Mammary epithelial cell (primary cell): ENCODE measurements at regions of chr19 and their contacts with region 1.

Region 1: DNA sequence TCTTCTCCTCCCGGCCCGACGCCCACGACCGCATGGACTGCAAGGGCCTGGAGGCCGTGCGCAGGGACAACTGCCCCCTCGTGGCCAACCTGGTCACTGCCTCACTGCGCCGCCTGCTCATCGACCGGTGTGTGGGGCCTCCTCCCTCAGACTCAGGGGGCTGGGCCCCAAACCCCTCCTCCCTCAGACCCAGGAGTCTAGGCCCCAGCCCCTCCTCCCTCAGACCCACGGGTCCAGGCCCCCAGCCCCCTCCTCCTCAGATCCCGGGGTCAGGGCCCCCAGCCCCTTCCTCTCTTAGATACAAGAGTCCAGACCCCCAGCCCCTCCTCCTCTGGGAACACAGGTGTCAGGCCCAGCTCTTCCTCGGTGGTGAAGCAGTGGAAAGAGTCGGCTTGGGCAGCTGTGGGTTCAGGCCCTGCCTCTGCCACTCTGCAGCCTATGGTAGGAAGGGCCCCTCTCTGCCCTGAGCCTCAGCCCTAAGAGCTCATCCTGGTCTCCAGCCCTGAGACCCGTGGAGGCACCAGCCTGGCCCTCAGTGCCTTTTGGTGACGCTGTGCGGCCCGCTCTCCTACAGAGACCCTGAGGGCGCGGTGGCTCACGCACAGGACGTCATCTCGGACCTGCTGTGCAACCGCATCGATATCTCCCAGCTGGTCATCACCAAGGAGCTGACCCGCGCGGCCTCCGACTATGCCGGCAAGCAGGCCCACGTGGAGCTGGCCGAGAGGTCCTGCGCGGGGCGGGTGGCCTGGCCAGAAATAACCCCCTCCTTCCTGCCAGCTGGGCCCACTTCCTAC is 3.7 kb upstream of the SPIB start:
- DNase-seq: peak; percentile 18
- H3K4me3 ChIP-seq: no peak overlapping the region
- H3K27ac ChIP-seq: no peak overlapping the region
- H3K4me1 ChIP-seq: no peaks in the 10 kb centered on the region
- H3K27me3 ChIP-seq: no peaks in the 10 kb centered on the region
- CTCF ChIP-seq: peak; percentile 57 to 69

Region 2: DNA sequence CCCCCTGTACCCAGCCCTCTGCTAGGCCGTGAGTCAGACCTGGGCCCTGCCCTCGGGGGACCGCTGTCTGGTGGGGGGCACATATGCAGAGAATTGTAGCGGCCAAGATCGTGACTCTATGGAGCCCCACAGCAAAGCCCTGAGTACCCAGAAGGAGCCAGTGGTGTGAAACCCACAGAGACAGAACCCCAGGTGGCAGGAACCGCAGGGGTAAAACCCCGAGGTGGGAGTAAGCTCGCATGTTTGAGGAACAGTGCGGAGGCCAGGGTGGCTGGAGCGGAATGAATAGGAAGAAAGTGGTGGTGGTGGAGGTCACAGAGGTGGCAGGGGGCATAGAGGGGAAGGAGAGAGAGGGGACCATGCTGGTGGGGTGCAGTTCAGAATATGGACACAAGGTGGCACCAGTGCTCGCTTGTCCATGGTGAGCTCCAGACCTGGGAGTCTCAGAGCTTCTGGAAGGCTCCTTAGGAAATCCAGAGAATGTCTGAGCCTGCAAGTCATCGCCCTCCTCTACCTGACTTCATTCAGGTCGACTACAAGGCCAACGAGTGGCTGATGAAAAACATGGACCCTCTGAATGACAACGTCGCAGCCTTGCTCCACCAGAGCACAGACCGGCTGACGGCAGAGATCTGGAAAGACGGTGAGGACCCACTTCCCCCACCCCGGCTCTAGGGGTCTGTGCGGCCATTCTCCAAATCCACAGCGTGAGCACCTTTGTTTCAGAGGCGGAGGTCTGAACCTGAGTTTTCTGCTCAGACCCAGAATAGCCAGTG is 162.8 kb before region 1 on chr19:
- CTCF ChIA-PET with region 1: interaction called, 26 read pairs
- dilution Hi-C with region 1: no loop called
- in situ Hi-C with region 1: no loop called
- intact Hi-C with region 1: no loop called
- DNase-seq: no peak
- H3K4me3 ChIP-seq: no peak overlapping the region
- H3K27ac ChIP-seq: no peak overlapping the region
- H3K4me1 ChIP-seq: no peaks in the 10 kb centered on the region
- H3K27me3 ChIP-seq: no peaks in the 10 kb centered on the region
- CTCF ChIP-seq: peak; percentile 29 to 41

Region 3: GRCh38 chr19:50357178-50358100 is 57.6 kb before region 1 on chr19:
- CTCF ChIA-PET with region 1: no interaction called
- dilution Hi-C with region 1: no loop called
- in situ Hi-C with region 1: no loop called
- intact Hi-C with region 1: loop called (anchors 1 kb)
- DNase-seq: peak; percentile 34
- H3K4me3 ChIP-seq: peak overlapping the region; percentile 16 to 53 (median 17)
- H3K27ac ChIP-seq: no peak overlapping the region
- H3K4me1 ChIP-seq: peaks cover 6% of the 10 kb centered on the region
- H3K27me3 ChIP-seq: no peaks in the 10 kb centered on the region
- CTCF ChIP-seq: peak; percentile 65 to 79

Region 4: DNA sequence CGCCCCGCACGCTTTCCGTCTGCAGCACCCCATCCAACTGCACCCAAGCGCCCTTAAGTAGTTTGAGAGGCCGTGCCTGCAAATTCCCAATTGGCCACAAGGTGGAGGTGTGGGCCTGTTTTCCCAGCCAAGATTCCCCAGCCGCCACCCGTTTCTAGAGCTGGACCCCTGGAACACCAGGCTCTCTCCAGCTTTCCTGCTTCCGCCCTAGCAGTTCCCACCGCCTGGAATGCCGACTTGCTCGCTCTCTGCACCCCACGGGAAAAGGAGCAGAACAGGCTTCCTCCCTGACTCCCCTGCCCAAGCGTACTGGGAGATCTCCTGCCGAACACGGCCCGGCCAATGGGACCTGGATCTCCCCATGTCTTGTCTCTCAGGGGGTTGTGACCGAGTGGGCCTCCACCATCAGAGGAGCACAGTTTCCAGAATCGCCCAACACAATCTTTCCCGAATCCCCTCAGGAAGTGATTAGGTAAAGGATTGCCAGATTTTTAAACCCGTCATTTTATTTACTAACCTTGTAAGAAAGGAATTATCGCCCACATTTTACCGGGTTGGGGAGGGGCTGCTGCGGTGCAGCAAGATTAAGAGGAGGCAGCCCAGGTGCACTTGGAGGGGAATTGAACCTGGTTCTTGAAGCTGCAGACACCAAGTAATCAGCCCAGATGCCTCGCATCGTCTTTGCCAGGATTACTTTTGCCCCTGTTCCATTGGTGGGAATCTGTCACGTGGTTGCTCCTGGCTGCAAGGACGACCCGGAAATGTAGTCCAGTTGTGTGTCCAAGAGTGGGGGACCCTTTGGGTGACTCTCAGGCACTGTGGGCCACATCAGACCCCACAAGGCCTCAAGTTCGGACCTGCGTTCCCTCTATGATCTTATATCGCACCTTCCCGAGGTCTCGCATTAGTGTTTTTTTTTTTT is 46.2 kb before region 1 on chr19:
- CTCF ChIA-PET with region 1: no interaction called
- dilution Hi-C with region 1: no loop called
- in situ Hi-C with region 1: no loop called
- intact Hi-C with region 1: loop called (anchors 1 kb)
- DNase-seq: peak; percentile 73
- H3K4me3 ChIP-seq: peak overlapping the region; percentile 72 to 75 (median 74)
- H3K27ac ChIP-seq: peak overlapping the region; percentile 36
- H3K4me1 ChIP-seq: peaks cover 5% of the 10 kb centered on the region
- H3K27me3 ChIP-seq: no peaks in the 10 kb centered on the region
- CTCF ChIP-seq: peak; percentile 68 to 82

Region 5: DNA sequence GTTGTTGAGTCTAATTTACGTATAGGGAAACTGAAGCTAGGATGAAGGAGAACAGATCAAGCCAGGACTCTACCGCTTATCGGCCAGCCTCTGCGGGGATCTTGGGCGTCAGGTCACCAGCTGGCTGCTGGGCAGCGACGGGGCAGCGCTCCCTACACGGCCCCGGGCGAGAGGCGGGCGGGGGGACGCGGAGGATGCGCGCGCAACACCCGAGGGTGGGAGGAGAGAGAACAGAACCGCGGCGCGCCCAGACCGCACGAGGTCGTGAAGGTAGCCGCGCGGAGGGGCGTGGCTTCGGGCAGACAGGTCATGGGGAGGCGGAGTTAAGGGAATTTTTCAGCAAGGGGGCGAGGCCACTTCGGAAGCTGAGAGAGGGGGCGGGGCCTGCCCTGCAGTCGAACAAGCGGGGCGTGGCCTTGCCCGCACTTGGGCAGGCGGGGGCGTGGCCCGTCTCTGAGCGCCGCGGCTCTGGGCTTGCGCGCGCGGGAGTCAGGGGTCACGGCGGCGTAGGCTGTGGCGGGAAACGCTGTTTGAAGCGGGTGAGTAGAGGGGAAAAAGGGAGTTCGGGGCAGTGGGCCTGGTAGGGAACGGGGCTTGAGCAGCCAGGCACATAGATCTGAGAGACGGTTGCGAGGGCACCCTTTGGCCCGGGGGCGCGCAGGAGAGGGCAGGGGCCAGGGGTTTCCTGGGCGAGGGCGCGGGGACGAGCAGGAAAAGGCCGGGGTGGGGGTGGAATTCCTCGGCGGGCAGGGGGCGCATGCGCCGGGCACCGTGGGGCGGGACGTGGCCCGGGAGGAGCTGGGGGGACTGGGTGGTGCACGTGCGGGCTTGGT is 31.0 kb before region 1 on chr19 and contains the start of gene POLD1:
- CTCF ChIA-PET with region 1: no interaction called
- dilution Hi-C with region 1: no loop called
- in situ Hi-C with region 1: no loop called
- intact Hi-C with region 1: loop called (anchors 2 kb)
- DNase-seq: peak; percentile 95
- H3K4me3 ChIP-seq: peak within 1 kb of the TSS; percentile 57 to 90 (median 74)
- H3K27ac ChIP-seq: peak within 1 kb of the TSS; percentile 70
- H3K4me1 ChIP-seq: peaks cover 6% of the 10 kb centered on the region
- H3K27me3 ChIP-seq: no peaks in the 10 kb centered on the region
- CTCF ChIP-seq: no peak
- total RNA-seq, gene POLD1: 16.3 to 49.8 TPM

Region 6: GRCh38 chr19:50476224-50476942 is 61.3 kb after region 1 on chr19 and contains the starts of genes EMC10 and GARIN5A:
- CTCF ChIA-PET with region 1: no interaction called
- dilution Hi-C with region 1: no loop called
- in situ Hi-C with region 1: no loop called
- intact Hi-C with region 1: no loop called
- DNase-seq: peak; percentile 92
- H3K4me3 ChIP-seq: peak within 1 kb of the TSS; percentile 80 to 96 (median 85)
- H3K27ac ChIP-seq: peak within 1 kb of the TSS; percentile 48
- H3K4me1 ChIP-seq: peaks cover 7% of the 10 kb centered on the region
- H3K27me3 ChIP-seq: no peaks in the 10 kb centered on the region
- CTCF ChIP-seq: no peak
- total RNA-seq, gene EMC10: 53.8 to 77.1 TPM
- total RNA-seq, gene GARIN5A: 1.0 to 2.1 TPM